K562 (cell line): ENCODE measurements at regions of chr6 and their contacts with region 1.

Region 1: DNA sequence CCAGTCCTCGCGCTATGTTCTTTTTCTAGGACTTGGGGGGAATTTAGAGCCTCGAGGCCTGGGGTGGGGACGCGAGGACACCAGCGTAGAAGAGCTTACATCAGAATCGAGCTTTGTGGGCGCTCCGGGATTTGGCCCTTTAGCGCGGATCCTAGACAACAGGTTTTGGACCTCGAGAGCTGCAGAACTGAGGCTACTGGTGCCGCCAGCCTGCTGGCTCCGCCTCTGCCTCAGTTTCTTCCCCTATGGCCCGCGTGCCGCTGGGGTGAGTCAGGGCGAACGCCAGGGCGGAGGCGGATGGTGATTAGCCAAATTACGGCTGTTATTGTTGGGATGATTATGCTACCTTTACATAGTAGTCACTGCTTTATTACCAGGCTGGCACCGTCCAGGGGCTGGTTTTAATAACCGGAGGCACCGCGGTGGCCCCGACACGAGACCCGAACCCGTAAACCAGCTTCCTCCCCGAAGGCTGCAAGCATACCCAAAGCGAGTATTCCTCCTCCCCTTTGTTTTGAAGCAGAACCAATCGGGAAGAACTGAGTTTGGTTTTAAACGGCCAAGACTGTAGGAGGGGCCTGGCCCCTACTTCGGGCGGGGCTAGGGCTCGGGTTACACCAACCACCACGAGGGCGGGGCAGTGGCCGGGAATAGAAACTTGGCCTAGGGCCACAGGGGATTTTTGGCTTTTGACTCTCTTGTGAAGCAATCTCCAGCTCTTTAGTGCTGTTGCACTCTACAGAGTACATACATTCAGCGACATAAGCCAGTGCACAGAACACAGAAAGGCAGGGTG is 639 bp upstream of the GTPBP2 start:
- DNase-seq: peak; percentile 92 to 99 (median 96)
- ATAC-seq: peak; percentile 75
- H3K4me3 ChIP-seq: peak overlapping the region; percentile 58
- H3K27ac ChIP-seq: peak overlapping the region; percentile 97
- H3K4me1 ChIP-seq: peaks cover 40 to 59% of the 10 kb centered on the region in 2 experiments
- H3K27me3 ChIP-seq: no peaks in the 10 kb centered on the region; a peak in 1 of 5 replicates
- CTCF ChIP-seq: no peak
- EP300 ChIP-seq: peak; percentile 53; the same call in 1 of the 2 replicates
- POLR2A ChIP-seq: peak; percentile 97
- RAD21 ChIP-seq: peak in 1 of 2 experiments; percentile 5; a peak in 2 of 4 replicates

Region 2: DNA sequence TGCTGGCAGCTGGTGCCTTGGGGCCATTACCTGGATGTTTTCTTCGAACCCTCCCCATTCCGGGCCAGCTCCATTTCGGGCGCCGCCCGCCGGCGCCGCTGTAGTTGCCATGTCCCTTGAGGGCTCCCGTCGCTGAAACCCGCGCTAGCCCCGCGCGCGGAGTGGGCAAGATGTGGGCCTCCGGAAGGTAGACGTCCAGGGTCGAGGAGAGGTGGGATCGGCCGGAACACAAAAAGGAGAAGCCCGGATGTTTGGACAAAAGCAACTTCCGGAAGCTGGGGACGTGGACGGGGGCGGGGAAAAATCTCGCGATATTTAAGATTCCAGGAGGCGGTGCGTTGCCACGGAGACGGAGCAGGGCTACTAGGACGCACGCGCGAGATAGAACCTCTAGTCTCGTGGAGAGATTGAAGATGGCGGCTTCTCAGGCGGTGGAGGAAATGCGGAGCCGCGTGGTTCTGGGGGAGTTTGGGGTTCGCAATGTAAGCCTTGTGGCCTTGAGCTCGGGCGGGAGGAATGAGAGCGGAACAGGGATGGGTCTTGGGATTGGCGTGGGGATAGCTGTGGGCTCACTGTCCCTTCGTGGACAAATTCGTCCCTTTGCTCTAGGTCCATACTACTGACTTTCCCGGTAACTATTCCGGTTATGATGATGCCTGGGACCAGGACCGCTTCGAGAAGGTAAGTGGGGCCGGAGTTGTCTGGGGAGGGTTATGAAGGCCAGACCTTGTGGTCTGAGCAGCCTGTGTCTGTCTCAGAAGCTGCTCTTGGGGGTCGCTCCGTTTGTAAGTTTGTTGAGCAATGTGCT is 112.8 kb before region 1 on chr6 and contains the starts of genes POLR1C and YIPF3:
- CTCF ChIA-PET with region 1: no interaction called
- POLR2A ChIA-PET with region 1: interaction called, 12 read pairs
- in situ Hi-C with region 1: no loop called
- intact Hi-C with region 1: no loop called
- DNase-seq: peak; percentile 98 to 100 (median 99)
- ATAC-seq: peak; percentile 90
- H3K4me3 ChIP-seq: peak within 1 kb of the TSS; percentile 80
- H3K27ac ChIP-seq: peak within 1 kb of the TSS; percentile 91
- H3K4me1 ChIP-seq: peaks cover 10 to 19% of the 10 kb centered on the region in 2 experiments; a peak in 3 of 5 replicates
- H3K27me3 ChIP-seq: no peaks in the 10 kb centered on the region
- CTCF ChIP-seq: peak in 2 of 3 experiments; percentile 9 to 26; a peak in 2 of 6 replicates
- EP300 ChIP-seq: peak; percentile 38; the same call in 1 of the 2 replicates
- POLR2A ChIP-seq: peak; percentile 99
- RAD21 ChIP-seq: no peak
- polyA plus RNA-seq, gene POLR1C: 405 to 429 TPM
- polyA plus RNA-seq, gene YIPF3: 40.4 to 48.6 TPM

Region 3: GRCh38 chr6:43608310-43608763 is 21.4 kb before region 1 on chr6:
- CTCF ChIA-PET with region 1: no interaction called
- POLR2A ChIA-PET with region 1: interaction called, 135 read pairs
- in situ Hi-C with region 1: no loop called
- intact Hi-C with region 1: no loop called
- DNase-seq: peak; percentile 72 to 88 (median 74)
- ATAC-seq: peak; percentile 93
- H3K4me3 ChIP-seq: no peak overlapping the region
- H3K27ac ChIP-seq: no peak overlapping the region; the same call in 2 of the 3 replicates
- H3K4me1 ChIP-seq: peaks cover 3 to 14% of the 10 kb centered on the region in 2 experiments; a peak in 4 of 5 replicates
- H3K27me3 ChIP-seq: no peaks in the 10 kb centered on the region
- CTCF ChIP-seq: peak; percentile 73 to 90 (median 87)
- EP300 ChIP-seq: no peak
- POLR2A ChIP-seq: no peak
- RAD21 ChIP-seq: peak; percentile 75 to 81

Region 4: DNA sequence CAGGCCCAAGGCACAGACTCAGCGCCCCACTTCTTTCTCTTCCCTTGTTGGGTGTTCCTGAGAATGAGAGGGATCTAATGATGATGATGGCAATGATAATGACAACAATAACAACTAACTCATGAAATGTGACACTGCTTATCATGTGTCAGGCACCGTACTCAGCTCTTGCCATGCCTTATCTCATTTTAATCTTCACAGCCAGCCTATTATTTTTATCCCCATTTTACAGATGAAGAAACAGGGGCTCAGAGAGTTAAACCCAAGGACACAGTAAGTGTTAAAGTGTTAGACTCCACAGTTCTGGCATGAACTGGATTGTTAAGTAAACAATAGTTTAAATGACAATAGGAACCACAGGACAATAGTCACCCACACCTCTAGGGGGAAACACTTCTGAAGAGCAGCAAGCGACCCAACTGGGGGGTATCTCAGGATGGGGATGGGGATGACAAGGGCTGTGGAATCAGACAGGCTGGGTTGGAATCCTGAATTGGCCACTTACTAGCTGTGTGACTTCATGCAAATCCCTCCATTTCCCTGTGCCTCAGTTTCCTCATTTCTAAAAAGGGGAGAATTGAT is 27.6 kb after region 1 on chr6:
- CTCF ChIA-PET with region 1: no interaction called
- POLR2A ChIA-PET with region 1: interaction called, 11 read pairs
- in situ Hi-C with region 1: no loop called
- intact Hi-C with region 1: no loop called
- DNase-seq: peak in 1 of 4 experiments; percentile 51
- ATAC-seq: peak; percentile 43; the same call in 1 of the 3 replicates
- H3K4me3 ChIP-seq: no peak overlapping the region
- H3K27ac ChIP-seq: no peak overlapping the region
- H3K4me1 ChIP-seq: peaks cover 3 to 10% of the 10 kb centered on the region in 2 experiments; a peak in 3 of 5 replicates
- H3K27me3 ChIP-seq: no peaks in the 10 kb centered on the region
- CTCF ChIP-seq: peak in 1 of 3 experiments; percentile 13; a peak in 1 of 6 replicates
- EP300 ChIP-seq: no peak
- POLR2A ChIP-seq: no peak
- RAD21 ChIP-seq: no peak

Region 5: DNA sequence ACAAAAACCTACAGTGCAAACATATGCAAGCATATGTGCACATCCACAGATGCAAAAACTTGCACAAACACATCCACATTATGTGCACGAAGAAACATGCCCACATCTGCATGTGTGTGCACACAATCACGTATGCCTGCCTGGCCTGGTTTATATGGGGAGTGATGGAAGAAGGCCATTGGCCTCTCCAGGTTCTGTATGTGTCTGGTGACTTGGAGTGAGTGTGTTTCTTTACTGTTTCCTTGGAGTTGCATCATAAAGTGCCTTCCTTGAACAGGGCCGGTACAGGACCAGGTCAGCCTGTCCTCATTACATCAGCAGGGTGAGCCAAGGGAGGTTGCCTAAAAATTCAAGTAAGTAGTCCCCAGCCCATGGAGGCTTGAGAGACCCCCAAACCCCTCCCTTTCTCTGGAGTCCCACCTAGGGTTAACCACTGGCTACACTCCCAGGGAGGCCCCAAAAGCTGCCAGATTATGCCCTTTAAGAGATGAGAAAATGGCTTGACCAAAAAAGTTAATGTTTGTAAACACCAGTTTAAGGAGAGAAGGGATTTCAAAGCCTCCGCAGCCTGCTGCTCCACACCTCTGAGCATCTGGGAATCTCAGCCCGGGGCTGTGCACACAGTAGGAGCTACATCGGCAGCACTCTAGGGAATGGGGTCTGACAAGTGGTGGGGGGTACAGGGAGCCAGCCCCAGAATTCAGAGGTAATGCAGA is 281.1 kb after region 1 on chr6:
- CTCF ChIA-PET with region 1: no interaction called
- POLR2A ChIA-PET with region 1: no interaction called
- in situ Hi-C with region 1: no loop called
- intact Hi-C with region 1: no loop called
- DNase-seq: peak in 1 of 4 experiments; percentile 73
- ATAC-seq: peak; percentile 89
- H3K4me3 ChIP-seq: peak overlapping the region; percentile 4; the same call in 1 of the 2 replicates
- H3K27ac ChIP-seq: peak overlapping the region; percentile 72
- H3K4me1 ChIP-seq: peaks cover 18 to 63% of the 10 kb centered on the region in 2 experiments
- H3K27me3 ChIP-seq: no peaks in the 10 kb centered on the region
- CTCF ChIP-seq: no peak
- EP300 ChIP-seq: peak; percentile 97
- POLR2A ChIP-seq: no peak
- RAD21 ChIP-seq: peak; percentile 30 to 43; a peak in 3 of 4 replicates

Region 6: DNA sequence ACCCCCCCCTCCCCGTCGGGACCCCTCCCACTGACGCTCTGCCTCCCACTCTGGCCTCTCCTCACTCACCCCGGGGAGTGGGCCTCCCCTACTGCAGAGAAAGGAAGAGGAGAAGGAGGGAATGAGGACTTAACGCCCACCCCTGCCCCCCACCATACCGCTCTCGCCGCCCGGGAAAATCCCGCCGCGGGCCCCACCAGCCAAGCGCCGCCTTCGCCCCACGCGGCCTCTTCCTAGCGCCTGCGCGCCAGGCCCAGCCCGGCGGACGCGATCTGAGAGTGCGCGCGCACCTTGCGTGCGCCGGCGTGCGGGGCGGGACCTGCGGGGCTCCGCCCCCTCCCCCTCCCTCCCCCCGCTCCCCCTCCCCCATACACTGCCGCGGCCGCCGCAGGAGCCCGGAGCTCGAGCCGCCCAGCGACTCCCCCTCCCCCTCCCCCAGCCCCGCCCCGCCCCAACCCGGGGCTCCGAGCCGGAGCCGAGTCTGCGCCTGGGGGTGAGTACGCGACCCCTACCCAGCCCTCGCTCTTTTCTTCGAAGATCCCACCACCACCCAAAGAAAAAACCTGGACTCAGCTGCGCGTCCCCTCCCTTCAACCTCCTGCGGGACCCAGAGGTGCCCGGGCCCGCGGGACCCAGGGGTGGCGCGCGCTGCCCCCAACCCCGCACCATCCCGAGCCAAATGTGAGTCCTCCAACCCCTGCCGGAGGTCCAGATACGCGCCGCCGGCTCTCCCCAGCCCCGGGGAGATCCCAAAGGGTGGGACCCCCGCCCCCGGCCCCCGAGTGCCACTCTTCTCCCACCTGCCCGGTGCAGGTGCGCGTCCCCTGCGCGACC is 497.7 kb after region 1 on chr6 and contains the starts of genes MRPL14 and TMEM63B:
- CTCF ChIA-PET with region 1: no interaction called
- POLR2A ChIA-PET with region 1: no interaction called
- in situ Hi-C with region 1: no loop called
- intact Hi-C with region 1: loop called (anchors 5 kb)
- DNase-seq: peak; percentile 94 to 99 (median 99)
- ATAC-seq: peak; percentile 85
- H3K4me3 ChIP-seq: peak within 1 kb of the TSS; percentile 76
- H3K27ac ChIP-seq: peak within 1 kb of the TSS; percentile 75
- H3K4me1 ChIP-seq: peaks cover 51 to 64% of the 10 kb centered on the region in 2 experiments
- H3K27me3 ChIP-seq: no peaks in the 10 kb centered on the region
- CTCF ChIP-seq: no peak
- EP300 ChIP-seq: no peak
- POLR2A ChIP-seq: peak; percentile 89
- RAD21 ChIP-seq: no peak
- polyA plus RNA-seq, gene MRPL14: 414 to 424 TPM
- polyA plus RNA-seq, gene TMEM63B: 0.14 to 0.17 TPM